Aorta (tissue), 5 donors: ENCODE measurements at regions of chr9 and their contacts with region 1.

Region 1: DNA sequence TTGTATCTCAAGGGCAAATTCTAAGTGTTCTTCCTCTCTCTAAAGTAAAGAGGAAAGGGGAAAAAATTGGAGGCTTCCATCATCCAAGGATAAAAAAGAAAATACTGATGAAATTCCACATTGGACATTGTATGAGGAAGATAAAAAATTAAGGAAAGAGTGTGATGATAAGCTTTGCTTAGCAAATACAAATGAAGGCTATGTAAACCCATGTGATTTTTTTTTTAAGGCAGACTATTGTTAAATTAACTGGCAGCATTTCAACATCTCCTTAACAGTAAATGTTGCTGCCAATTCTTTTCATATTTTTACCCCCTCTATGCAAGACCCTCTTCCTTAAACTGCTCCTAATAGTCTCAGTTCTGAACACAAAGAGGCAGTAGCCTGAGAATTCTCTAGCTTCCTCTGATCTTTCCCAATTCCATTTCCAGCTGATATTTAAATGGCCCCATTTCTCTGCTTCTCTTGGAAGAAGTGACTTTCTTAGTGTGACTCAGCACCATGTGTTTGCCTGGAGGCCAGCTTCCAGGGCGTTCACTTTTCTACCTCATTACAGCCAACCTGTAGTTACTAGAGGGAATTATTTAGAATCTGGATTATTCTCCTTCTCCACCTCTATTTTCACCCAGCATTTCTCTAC is 159.7 kb downstream of the TLE1 start:
- DNase-seq: peak in 1 of 2 donors; percentile 55
- ATAC-seq: peak; percentile 73
- H3K4me3 ChIP-seq: no peak overlapping the region
- H3K27ac ChIP-seq: no peak overlapping the region
- H3K4me1 ChIP-seq: no peaks in the 10 kb centered on the region
- H3K27me3 ChIP-seq: no peaks in the 10 kb centered on the region

Region 2: DNA sequence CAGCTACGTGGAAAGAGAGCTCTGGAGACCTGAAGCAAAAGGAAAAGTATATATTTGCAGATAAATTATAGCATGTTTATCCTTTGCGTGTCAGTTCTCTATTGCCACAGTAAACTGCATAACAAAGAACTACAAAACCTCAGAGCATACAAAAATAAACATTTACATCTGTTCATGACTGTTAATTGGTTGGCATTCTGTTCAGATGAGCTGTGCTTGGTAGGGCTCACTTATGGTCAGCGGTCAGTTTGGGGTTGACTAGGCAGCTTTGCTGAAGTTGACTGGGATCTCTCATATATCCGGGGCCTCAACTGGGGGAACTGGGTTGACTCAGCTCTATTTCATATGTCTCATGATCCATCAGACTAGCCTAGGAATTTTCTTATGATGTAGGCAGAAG is 98.0 kb before region 1 on chr9:
- intact Hi-C with region 1: no loop called
- DNase-seq: no peak
- ATAC-seq: no peak
- H3K4me3 ChIP-seq: no peak overlapping the region
- H3K27ac ChIP-seq: no peak overlapping the region
- H3K4me1 ChIP-seq: no peaks in the 10 kb centered on the region
- H3K27me3 ChIP-seq: no peaks in the 10 kb centered on the region

Region 3: GRCh38 chr9:81609782-81610739 is 80.4 kb after region 1 on chr9:
- intact Hi-C with region 1: no loop called
- DNase-seq: no peak
- ATAC-seq: no peak
- H3K4me3 ChIP-seq: no peak overlapping the region
- H3K27ac ChIP-seq: peak overlapping the region; percentile 5 to 75
- H3K4me1 ChIP-seq: peaks cover 0 to 3% of the 10 kb centered on the region in 2 donors
- H3K27me3 ChIP-seq: no peaks in the 10 kb centered on the region

Region 4: DNA sequence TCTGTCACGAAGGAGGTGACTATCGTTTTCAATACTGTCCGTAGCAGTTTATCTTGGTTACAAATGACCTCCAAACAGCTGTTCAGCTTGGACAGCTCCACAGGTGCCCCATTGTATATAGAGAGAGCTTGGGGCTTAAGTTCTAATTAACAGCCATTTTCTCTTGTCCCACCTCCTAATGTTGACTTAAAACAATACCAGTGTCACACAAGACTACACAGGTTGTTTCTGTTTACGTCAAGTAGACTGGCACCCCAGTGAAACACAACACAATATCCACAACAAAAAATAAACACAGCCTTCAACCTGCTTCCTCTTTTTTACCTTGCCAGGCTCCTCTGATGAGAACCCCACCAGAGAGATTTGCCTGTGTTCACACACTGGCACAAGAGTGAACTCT is 199.5 kb after region 1 on chr9:
- intact Hi-C with region 1: no loop called
- DNase-seq: no peak
- ATAC-seq: no peak
- H3K4me3 ChIP-seq: no peak overlapping the region
- H3K27ac ChIP-seq: no peak overlapping the region
- H3K4me1 ChIP-seq: no peaks in the 10 kb centered on the region
- H3K27me3 ChIP-seq: no peaks in the 10 kb centered on the region

Region 5: DNA sequence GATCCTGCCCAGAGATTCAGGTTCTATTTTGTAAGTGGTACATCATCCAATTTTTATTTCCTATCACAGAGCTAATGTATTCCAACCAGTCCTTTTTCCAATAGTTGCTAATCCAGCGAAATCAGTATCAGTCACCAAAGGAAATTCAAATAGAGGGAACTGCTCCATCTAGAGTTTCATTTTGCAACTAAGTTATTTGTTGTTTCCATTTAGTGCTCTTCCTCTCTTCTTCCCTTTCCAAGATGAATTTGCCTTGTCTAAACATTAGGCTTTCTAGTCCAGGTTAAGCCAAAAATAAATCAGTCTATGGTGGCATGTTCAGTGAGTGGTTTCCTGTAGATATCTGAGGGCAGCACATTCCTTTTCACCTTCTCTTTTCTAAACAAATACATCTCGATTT is 318.8 kb after region 1 on chr9:
- intact Hi-C with region 1: loop called in 1 of 2 experiments (anchors 10 kb)
- DNase-seq: no peak
- ATAC-seq: peak; percentile 58
- H3K4me3 ChIP-seq: no peak overlapping the region
- H3K27ac ChIP-seq: no peak overlapping the region
- H3K4me1 ChIP-seq: no peaks in the 10 kb centered on the region
- H3K27me3 ChIP-seq: no peaks in the 10 kb centered on the region